GM10248 (cell line): ENCODE measurements at regions of chr2 and their contacts with region 1.

Region 1: GRCh38 chr2:11753886-11754699 is 7.7 kb downstream of the LPIN1 start:
- DNase-seq: peak; percentile 39
- CTCF ChIP-seq: no peak

Region 2: DNA sequence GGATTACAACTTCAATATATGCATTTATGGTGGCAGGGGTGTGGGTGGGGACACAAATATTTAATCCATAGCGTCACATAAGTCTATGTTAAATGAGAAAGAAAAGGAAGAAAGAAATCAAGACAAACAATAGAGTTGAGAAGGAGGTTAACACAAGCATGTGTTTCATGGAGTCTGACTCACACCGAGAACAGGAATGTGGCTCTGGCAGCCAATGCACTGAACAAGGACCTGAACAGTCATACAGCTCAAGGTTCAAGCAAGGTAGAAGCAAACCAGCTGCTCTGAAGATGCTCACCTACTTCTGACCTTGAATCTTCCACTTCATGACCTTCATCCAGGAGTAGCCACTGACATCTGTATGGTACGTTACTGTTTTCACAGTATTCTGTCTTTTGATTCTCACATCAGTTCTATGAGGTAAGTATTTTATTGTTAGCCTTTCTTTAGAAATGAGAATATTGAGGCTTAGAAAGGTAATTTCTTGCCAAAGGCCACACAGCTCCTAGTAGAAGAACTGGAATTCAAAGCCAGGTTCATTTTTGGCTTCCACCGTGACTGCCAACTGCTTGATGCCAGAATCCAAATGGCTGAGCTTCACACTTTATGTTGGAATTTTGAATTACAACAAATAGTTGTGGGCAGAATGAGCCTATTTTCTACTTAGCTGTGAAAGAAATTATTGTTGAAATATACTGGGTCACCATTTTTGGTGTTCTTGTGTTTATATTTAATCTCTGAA is 43.7 kb before region 1 on chr2:
- CTCF ChIA-PET with region 1: no interaction called
- POLR2A ChIA-PET with region 1: no interaction called
- DNase-seq: no peak
- CTCF ChIP-seq: no peak

Region 3: DNA sequence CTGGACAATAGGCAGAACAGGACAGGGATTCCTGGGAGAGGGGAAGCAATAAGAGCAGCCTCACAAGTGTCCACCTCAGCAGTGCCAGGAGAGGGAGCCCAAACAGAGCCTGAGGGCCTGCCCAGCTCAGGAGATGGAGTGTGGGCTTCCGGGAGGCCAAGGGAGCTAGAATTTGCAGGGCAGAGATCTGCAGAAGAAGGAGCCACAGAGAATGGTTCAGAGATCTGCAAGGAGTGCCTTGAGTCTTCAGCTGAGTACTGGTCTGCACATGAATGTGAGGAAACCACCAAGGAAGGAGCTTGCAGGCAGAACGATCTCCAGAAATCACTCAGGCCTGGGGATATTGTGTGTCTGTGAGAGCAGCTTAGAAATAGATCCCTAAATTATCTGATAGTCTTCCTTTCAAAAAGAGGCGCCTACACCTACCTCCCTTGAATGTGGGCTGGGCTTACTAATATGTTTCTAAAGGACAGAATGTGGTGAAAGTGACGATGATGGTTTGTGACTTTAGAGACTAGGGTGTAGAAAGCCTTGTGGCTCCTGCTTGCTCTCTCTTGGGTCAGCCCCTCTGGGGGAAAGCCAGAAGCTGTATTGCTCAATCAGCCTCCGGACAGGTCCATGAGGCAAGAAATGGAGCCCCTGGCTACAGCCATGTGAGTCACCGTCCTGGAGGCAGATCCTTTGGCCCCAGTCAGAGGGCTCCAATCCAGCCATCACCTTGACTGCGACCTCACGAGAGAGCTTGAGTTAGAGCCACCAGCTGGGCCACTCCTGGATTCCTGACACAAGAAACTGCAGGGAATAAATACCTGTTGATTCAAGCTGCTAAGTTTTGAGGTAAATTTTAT is 15.3 kb before region 1 on chr2:
- CTCF ChIA-PET with region 1: interaction called, 45 read pairs
- POLR2A ChIA-PET with region 1: interaction called, 4 read pairs
- DNase-seq: no peak
- CTCF ChIP-seq: peak; percentile 56

Region 4: DNA sequence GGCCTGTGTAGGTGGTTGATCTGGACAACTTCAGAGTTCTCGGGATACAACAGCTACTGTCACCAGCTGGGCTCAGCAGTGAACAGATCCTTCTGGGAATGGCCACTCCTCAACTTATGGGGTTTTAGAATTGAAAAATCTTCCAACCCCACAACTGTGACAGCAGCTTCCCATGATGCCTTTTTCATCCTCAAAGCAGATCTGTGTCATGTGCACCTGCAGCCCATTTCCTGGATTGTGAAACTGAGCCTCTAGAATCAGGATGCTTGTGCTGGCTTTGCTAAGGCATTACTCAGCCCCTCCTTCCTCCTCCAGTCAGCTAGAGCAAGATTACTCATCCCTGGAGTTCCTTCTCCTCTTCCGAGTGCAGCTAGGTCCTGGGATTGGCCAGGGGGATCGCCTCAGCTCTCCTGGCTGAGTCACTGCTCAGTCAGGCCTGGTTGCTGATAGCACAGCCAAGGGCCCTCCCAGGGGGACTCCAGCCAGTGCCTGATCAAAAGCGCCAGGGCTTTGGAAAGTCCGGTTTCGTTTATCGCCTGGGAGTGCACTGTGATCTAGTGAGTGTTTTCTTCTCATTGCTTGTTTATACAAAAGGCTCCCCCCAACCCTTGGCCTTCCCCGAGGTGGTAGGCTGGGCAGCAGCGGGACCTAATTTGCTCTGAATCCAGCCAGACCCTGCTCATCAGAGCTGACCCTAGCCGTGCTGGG is 10.1 kb before region 1 on chr2:
- CTCF ChIA-PET with region 1: interaction called, 45 read pairs
- POLR2A ChIA-PET with region 1: interaction called, 4 read pairs
- DNase-seq: peak; percentile 82
- CTCF ChIP-seq: no peak

Region 5: GRCh38 chr2:11778923-11779757 is 25.0 kb after region 1 on chr2:
- CTCF ChIA-PET with region 1: interaction called, 207 read pairs
- POLR2A ChIA-PET with region 1: no interaction called
- DNase-seq: peak; percentile 84
- CTCF ChIP-seq: peak; percentile 93

Region 6: GRCh38 chr2:11784747-11785610 is 30.9 kb after region 1 on chr2:
- CTCF ChIA-PET with region 1: interaction called, 207 read pairs
- POLR2A ChIA-PET with region 1: interaction called, 3 read pairs
- DNase-seq: peak; percentile 81
- CTCF ChIP-seq: peak; percentile 91

Region 7: GRCh38 chr2:11891028-11891427 is 136.9 kb after region 1 on chr2:
- CTCF ChIA-PET with region 1: no interaction called
- POLR2A ChIA-PET with region 1: no interaction called
- DNase-seq: no peak
- CTCF ChIP-seq: no peak